HEK293 (cell line): ENCODE measurements at regions of chr1 and their contacts with region 1.

Region 1: DNA sequence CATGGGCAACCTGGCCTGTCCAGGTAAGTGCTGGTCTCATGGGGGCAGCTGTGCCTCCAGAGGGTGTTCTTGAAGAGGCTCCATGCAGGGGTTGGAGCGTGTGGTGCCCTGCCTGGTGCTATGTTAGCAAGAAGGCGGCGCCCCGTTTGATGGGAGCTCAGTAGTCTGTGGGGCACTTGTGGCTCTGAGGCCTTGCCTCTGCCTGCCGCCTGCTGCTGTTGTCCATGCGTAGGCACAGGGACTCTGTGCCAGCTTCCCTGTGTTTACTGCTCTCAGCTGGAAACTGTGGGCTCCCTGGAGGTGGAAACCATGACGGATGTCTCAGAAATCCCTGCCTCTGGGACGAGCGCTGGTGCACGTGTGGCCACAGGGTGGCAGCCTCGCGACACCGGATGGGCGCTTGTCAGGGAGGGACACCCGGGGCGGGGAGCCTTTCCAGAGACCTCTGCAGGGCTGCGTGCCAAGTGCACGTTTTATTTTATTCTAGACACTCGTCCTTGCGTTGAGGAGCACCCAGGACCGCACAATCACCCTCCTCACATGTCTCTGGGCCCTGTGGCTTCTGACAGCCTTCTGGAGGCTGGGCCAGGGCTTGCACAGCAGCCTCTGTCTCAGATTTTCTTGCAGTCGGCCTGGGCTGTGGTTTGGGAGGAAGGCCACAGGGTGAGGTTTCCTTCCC is 27.1 kb downstream of the SNAP47 start:
- H3K4me3 ChIP-seq: no peak overlapping the region
- H3K27ac ChIP-seq: no peak overlapping the region
- H3K4me1 ChIP-seq: peaks cover 5% of the 10 kb centered on the region
- CTCF ChIP-seq: peak; percentile 99

Region 2: GRCh38 chr1:227482023-227482299 is 280.4 kb before region 1 on chr1:
- CTCF ChIA-PET with region 1: interaction called, 10 read pairs
- POLR2A ChIA-PET with region 1: no interaction called
- H3K4me3 ChIP-seq: no peak overlapping the region
- H3K27ac ChIP-seq: no peak overlapping the region
- H3K4me1 ChIP-seq: no peaks in the 10 kb centered on the region
- CTCF ChIP-seq: no peak

Region 3: GRCh38 chr1:227946624-227947385 is 184.4 kb after region 1 on chr1:
- CTCF ChIA-PET with region 1: interaction called, 42 read pairs
- POLR2A ChIA-PET with region 1: interaction called, 7 read pairs
- H3K4me3 ChIP-seq: peak overlapping the region; percentile 51
- H3K27ac ChIP-seq: peak overlapping the region; percentile 40; the same call in 1 of the 2 replicates
- H3K4me1 ChIP-seq: peaks cover 14% of the 10 kb centered on the region
- CTCF ChIP-seq: peak; percentile 80; the same call in 1 of the 2 replicates

Region 4: DNA sequence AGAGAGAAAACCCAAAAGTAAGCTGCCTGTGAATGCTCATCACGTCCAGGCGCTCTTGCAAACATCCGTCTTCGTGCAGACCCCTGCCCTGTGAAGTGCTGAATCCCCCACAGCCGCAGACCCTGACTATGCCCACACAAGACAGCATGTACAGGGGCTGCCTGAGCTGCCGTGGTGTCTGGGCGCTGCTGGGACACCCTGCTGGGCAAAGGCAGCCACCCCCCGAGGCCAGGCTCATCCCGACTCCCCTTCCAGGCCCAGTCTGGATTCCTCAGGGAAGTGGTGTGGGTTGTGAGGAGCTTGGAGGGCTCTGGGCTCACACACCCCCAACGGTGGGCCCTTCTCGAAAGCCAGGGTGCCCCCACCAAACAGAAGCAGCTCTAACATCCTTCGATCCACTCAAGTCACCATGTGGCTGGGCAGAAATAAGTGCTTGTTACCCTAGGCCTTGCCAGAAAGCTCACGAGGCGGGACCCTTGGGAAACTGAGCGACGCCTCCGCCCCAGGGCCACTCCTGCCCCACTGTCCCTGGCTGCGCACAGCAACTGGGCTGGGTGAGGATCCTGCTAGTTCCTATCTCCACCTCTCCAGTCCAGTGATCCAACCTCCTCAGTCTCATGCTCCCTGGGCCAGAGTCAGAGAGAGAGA is 190.1 kb after region 1 on chr1:
- CTCF ChIA-PET with region 1: interaction called, 53 read pairs
- POLR2A ChIA-PET with region 1: interaction called, 7 read pairs
- H3K4me3 ChIP-seq: no peak overlapping the region
- H3K27ac ChIP-seq: no peak overlapping the region
- H3K4me1 ChIP-seq: 0 out of 2 replicates have a peak, but pooled peaks cover 4% of the 10 kb centered on the region
- CTCF ChIP-seq: no peak

Region 5: GRCh38 chr1:228197555-228198147 is 435.3 kb after region 1 on chr1:
- CTCF ChIA-PET with region 1: no interaction called
- POLR2A ChIA-PET with region 1: no interaction called
- H3K4me3 ChIP-seq: no peak overlapping the region
- H3K27ac ChIP-seq: no peak overlapping the region
- H3K4me1 ChIP-seq: no peaks in the 10 kb centered on the region
- CTCF ChIP-seq: no peak